ENCODE measurements at regions of chr1 and their contacts with region 1.

Region 1: GRCh38 chr1:1943834-1944570 is 24.9 kb upstream of the TMEM52 start:
- DNase-seq: peak; percentile 93
- H3K4me3 ChIP-seq: peak overlapping the region; percentile 26 to 38; a peak in 3 of 4 replicates
- H3K27ac ChIP-seq: no peak overlapping the region
- H3K4me1 ChIP-seq: peaks cover 0 to 22% of the 10 kb centered on the region in 2 experiments; a peak in 1 of 4 replicates
- H3K27me3 ChIP-seq: no peaks in the 10 kb centered on the region
- CTCF ChIP-seq: peak; percentile 66
- EP300 ChIP-seq: no peak
- RAD21 ChIP-seq: peak; percentile 50

Region 2: GRCh38 chr1:1899266-1899966 is 44.6 kb before region 1 on chr1:
- CTCF ChIA-PET with region 1: no interaction called
- POLR2A ChIA-PET with region 1: no interaction called
- DNase-seq: no peak
- H3K4me3 ChIP-seq: no peak overlapping the region
- H3K27ac ChIP-seq: no peak overlapping the region
- H3K4me1 ChIP-seq: peaks cover 0 to 22% of the 10 kb centered on the region in 2 experiments; a peak in 1 of 4 replicates
- H3K27me3 ChIP-seq: no peaks in the 10 kb centered on the region
- CTCF ChIP-seq: no peak
- EP300 ChIP-seq: no peak
- RAD21 ChIP-seq: no peak

Region 3: GRCh38 chr1:1922956-1923833 is 20.8 kb before region 1 on chr1:
- CTCF ChIA-PET with region 1: interaction called, 10 read pairs
- POLR2A ChIA-PET with region 1: no interaction called
- DNase-seq: no peak
- H3K4me3 ChIP-seq: no peak overlapping the region
- H3K27ac ChIP-seq: no peak overlapping the region
- H3K4me1 ChIP-seq: peaks cover 0 to 13% of the 10 kb centered on the region in 2 experiments; a peak in 1 of 4 replicates
- H3K27me3 ChIP-seq: no peaks in the 10 kb centered on the region
- CTCF ChIP-seq: no peak
- EP300 ChIP-seq: no peak
- RAD21 ChIP-seq: no peak

Region 4: DNA sequence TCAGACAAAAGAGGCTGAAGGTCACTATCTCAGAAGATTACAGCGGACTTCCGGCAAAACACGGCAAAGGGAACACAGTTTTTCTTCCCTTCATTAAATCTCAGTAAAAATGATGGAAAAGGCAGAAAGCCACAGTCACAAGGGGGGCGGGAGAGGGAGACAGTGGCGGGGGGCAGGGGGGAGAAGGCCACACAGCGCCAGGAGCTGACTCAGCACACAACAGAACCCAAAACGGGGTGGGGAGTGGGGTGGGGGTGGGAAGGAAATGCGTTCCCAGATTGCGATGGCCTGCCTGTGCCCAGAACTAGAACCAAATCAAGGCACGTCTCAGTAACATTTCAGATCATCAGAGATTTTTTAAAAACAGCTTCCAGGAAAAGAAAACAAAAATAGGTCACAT is 46.2 kb after region 1 on chr1:
- CTCF ChIA-PET with region 1: no interaction called
- POLR2A ChIA-PET with region 1: no interaction called
- DNase-seq: no peak
- H3K4me3 ChIP-seq: no peak overlapping the region
- H3K27ac ChIP-seq: no peak overlapping the region
- H3K4me1 ChIP-seq: no peaks in the 10 kb centered on the region; a peak in 1 of 4 replicates
- H3K27me3 ChIP-seq: no peaks in the 10 kb centered on the region
- CTCF ChIP-seq: no peak
- EP300 ChIP-seq: no peak
- RAD21 ChIP-seq: no peak

Region 5: GRCh38 chr1:2049718-2050427 is 105.9 kb after region 1 on chr1 and contains the start of gene PRKCZ:
- CTCF ChIA-PET with region 1: interaction called, 152 read pairs
- POLR2A ChIA-PET with region 1: interaction called, 6 read pairs
- DNase-seq: peak; percentile 97
- H3K4me3 ChIP-seq: peak within 1 kb of the TSS; percentile 56 to 70
- H3K27ac ChIP-seq: peak within 1 kb of the TSS in 1 of 2 experiments; percentile 83; a peak in 1 of 4 replicates
- H3K4me1 ChIP-seq: peaks cover 0 to 17% of the 10 kb centered on the region in 2 experiments; a peak in 1 of 4 replicates
- H3K27me3 ChIP-seq: no peaks in the 10 kb centered on the region
- CTCF ChIP-seq: no peak
- EP300 ChIP-seq: no peak
- RAD21 ChIP-seq: no peak
- polyA plus RNA-seq, gene PRKCZ: 20.1 and 24.2 TPM in 2 replicates

Measured in SK-N-SH (cell line).